ENCODE measurements at regions of chr1 and their contacts with region 1.

Region 1: DNA sequence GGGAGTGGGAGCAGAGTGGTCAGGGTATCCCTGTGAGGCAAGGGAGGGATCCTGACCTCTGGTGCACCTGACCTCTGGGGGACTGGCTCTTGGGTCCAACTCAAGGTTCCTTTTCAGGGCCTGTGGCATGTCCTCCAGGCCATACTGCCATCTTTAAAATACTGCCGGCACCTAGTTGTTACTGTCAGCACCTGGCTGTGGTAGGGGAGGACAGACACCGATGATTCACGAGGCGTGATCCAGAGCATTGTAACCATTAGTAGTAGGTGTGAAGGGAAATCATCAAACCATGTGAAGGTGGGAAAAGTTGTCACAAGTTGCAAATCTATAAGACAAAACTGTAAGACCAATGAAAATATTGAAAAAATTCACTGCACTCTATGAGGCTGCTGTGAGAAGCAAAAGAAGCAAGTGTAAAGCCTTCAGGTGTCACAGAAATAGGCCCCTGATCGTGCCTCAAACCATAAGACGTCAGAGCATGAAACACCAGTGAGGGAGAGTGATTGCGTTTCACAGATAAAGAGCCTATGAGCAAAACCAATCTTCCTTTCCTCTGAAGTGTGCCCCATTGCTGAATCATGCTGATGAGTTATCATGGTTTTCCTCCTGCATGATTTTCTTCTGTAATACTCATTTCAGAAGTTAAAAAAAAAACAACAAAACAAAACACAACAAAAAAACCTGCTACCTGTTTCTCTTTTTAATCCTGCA is 55.3 kb downstream of the CDC7 start:
- DNase-seq: peak; percentile 85 to 93 (median 88)
- H3K4me3 ChIP-seq: peak overlapping the region in 1 of 2 donors; percentile 19
- H3K4me3 Mint-ChIP-seq: peak overlapping the region in 7 of 8 donors; percentile 29 to 74 (median 65)
- H3K27ac ChIP-seq: peak overlapping the region; percentile 75
- H3K27ac Mint-ChIP-seq: peak overlapping the region; percentile 88 to 99 (median 94)
- H3K4me1 ChIP-seq: peaks cover 98% of the 10 kb centered on the region
- H3K4me1 Mint-ChIP-seq: peaks cover 65 to 97% (median 82%) of the 10 kb centered on the region in 4 donors
- H3K27me3 ChIP-seq: no peaks in the 10 kb centered on the region
- H3K27me3 Mint-ChIP-seq: no peaks in the 10 kb centered on the region

Region 2: GRCh38 chr1:91523482-91523881 is 32.5 kb before region 1 on chr1:
- CTCF ChIA-PET with region 1: no interaction called
- POLR2A ChIA-PET with region 1: no interaction called
- intact Hi-C with region 1: loop called (anchors 5 kb)
- DNase-seq: no peak
- H3K4me3 ChIP-seq: no peak overlapping the region
- H3K4me3 Mint-ChIP-seq: no peak overlapping the region
- H3K27ac ChIP-seq: no peak overlapping the region
- H3K27ac Mint-ChIP-seq: peak overlapping the region in 4 of 7 donors; percentile 28 to 90 (median 64)
- H3K4me1 ChIP-seq: peaks cover 4% of the 10 kb centered on the region
- H3K4me1 Mint-ChIP-seq: peaks cover 4 to 10% (median 7%) of the 10 kb centered on the region in 4 donors
- H3K27me3 ChIP-seq: no peaks in the 10 kb centered on the region
- H3K27me3 Mint-ChIP-seq: no peaks in the 10 kb centered on the region

Region 3: DNA sequence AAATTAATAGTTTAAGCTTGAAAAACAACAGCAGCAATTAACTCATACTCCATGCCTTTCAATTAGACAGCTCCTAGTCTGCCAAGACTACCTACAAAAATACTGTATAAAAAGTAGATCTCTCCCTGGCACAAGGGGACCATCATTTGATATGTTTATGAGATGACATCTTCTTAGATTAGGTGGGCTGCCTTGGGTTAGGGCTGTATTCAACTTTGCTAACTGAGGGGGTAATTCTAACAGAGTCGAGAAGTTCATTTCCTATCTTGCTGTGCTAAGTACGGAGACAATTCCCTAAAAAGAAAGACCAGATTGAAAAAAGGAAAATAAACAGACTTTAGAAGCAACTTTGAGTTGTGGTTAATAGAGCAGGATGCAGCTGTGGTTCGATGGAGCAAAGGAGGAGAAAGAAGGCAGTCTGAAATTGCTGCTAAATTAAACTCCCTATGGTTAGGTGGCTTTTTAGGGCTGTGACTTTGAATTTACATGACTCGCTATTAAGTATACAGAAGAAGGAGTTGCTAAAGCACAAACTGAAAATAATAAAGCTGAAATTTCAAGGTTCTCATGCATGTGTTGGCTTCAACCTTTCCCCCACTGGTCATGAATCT is 20.0 kb after region 1 on chr1:
- CTCF ChIA-PET with region 1: interaction called, 6 read pairs
- POLR2A ChIA-PET with region 1: interaction called, 8 read pairs
- intact Hi-C with region 1: loop called (anchors 2 kb)
- DNase-seq: no peak
- H3K4me3 ChIP-seq: no peak overlapping the region
- H3K4me3 Mint-ChIP-seq: peak overlapping the region in 4 of 8 donors; percentile 3 to 14 (median 8)
- H3K27ac ChIP-seq: no peak overlapping the region
- H3K27ac Mint-ChIP-seq: peak overlapping the region in 5 of 7 donors; percentile 0 to 49 (median 8)
- H3K4me1 ChIP-seq: peaks cover 16% of the 10 kb centered on the region
- H3K4me1 Mint-ChIP-seq: peaks cover 20 to 31% (median 25%) of the 10 kb centered on the region in 4 donors
- H3K27me3 ChIP-seq: no peaks in the 10 kb centered on the region
- H3K27me3 Mint-ChIP-seq: no peaks in the 10 kb centered on the region

Region 4: DNA sequence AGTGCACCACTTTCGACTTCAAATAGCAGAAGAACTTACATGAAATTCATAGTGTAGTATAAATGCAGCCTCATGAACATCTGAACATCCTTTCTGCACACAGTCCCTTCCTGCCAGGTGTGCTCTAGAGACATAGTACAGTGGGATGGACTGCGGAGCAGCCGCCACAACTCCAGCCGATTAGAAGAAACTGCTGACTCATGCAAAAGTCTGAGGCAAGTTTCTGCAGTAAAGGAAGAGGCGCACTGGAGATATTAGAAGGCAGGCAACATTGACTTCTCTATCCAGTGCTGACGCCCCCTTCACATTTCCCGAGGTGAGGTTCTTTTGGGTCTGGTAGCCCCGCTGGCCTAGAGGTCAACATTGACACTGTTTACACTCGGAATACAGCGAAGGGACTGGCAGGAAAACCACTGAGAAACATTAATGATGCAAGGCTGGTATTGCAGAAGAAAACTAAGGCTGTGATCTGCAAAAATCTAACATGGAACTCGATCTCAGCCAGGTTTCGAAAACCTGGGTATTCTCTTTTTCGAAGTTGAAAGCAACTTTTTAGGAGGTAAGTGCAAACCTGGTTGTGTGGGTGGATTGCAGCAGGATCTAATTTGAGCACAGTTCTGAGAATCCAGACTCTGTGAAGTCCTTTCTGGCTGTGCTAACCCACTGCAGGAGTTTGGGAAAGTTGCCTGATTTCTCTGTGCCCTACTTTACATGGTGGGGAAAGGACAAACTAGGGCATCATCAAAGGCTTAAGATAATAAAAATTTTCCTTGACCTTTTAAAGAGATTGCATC is 35.4 kb after region 1 on chr1:
- CTCF ChIA-PET with region 1: no interaction called
- POLR2A ChIA-PET with region 1: interaction called, 5 read pairs
- intact Hi-C with region 1: loop called (anchors 1 kb)
- DNase-seq: peak in 3 of 5 donors; percentile 10 to 28 (median 17)
- H3K4me3 ChIP-seq: peak overlapping the region; percentile 18 to 32
- H3K4me3 Mint-ChIP-seq: peak overlapping the region; percentile 67 to 88 (median 80)
- H3K27ac ChIP-seq: no peak overlapping the region
- H3K27ac Mint-ChIP-seq: peak overlapping the region in 6 of 7 donors; percentile 41 to 85 (median 73)
- H3K4me1 ChIP-seq: peaks cover 22% of the 10 kb centered on the region
- H3K4me1 Mint-ChIP-seq: peaks cover 20 to 26% (median 21%) of the 10 kb centered on the region in 4 donors
- H3K27me3 ChIP-seq: no peaks in the 10 kb centered on the region
- H3K27me3 Mint-ChIP-seq: no peaks in the 10 kb centered on the region

Region 5: DNA sequence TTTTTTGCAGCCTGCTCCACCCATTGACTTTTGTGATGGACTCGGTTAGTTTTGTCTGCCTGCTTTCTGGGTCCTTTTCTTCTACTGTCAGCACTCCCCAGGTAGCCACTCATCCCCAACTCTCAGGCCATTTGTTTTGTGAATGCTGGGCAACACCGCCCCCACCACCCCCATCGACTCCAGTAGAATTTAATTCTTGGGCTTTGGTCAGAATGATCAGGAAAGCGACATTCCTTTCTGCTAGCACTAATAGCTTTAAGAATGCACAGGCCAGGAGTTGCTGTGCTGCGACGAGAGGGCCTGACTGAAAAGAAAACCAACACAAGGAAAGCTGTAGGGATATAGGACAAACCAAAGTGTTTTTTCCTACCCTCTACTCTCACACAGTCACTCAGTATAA is 89.1 kb after region 1 on chr1:
- CTCF ChIA-PET with region 1: no interaction called
- POLR2A ChIA-PET with region 1: no interaction called
- intact Hi-C with region 1: loop called (anchors 5 kb)
- DNase-seq: no peak
- H3K4me3 ChIP-seq: no peak overlapping the region
- H3K4me3 Mint-ChIP-seq: no peak overlapping the region
- H3K27ac ChIP-seq: no peak overlapping the region
- H3K27ac Mint-ChIP-seq: no peak overlapping the region
- H3K4me1 ChIP-seq: peaks cover 24% of the 10 kb centered on the region
- H3K4me1 Mint-ChIP-seq: peaks cover 17 to 34% (median 25%) of the 10 kb centered on the region in 4 donors
- H3K27me3 ChIP-seq: no peaks in the 10 kb centered on the region
- H3K27me3 Mint-ChIP-seq: no peaks in the 10 kb centered on the region